Right cardiac atrium (tissue), 5 donors: ENCODE measurements at regions of chr1 and their contacts with region 1.

Region 1: DNA sequence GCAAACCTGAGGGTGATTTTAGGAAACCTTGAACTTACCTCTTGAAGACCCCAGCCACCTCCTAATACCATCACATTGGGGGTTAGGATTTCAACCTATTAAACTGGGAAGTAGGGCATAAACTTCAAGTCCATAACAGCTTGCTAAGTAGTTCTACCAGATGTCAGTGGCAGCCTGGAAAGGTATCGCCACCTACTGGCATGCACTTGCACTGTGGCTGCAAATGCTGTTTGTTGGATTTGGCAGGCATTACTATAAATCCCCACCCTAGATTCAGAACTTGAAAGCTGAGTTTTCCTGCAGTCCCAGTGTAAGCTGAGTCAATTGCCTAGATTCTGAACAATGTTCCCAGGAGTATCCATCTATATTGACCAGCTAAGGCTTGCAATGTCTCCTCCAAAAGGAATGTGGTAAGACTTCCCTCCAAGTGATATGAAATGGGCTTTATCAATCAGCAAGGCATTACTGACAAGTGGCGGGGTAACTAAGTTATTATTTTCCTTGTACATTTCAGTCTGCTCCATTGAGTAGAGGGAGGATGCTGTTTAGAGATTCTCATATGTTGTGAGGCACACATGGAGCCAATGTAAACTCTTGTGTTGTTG is 474.5 kb downstream of the PTPRC start:
- DNase-seq: peak; percentile 23 to 65 (median 56)
- ATAC-seq: no peak
- H3K4me3 ChIP-seq: no peak overlapping the region
- H3K27ac ChIP-seq: no peak overlapping the region
- H3K4me1 ChIP-seq: no peaks in the 10 kb centered on the region
- H3K27me3 ChIP-seq: no peaks in the 10 kb centered on the region

Region 2: DNA sequence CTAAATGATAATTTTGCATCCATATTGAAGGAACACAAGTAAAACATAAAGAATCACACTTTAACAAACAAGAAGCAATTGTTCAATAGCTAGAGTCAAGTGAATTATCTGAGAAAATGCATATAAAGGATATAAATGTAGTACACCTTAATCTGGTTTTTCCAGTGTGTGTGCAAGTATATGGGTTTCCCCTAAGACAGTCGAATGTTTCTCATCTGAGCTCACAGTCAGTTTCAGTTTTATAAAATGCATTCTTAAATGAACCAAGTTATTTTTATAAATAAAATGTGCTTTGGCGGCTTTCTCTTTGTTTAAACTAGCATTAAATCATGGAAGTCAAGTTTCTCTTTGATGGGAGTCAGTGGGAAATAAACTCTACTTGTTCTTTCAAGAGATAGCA is 348.6 kb before region 1 on chr1:
- intact Hi-C with region 1: loop called in 1 of 4 experiments (anchors 5 kb)
- DNase-seq: no peak
- ATAC-seq: no peak
- H3K4me3 ChIP-seq: no peak overlapping the region
- H3K27ac ChIP-seq: no peak overlapping the region
- H3K4me1 ChIP-seq: no peaks in the 10 kb centered on the region
- H3K27me3 ChIP-seq: no peaks in the 10 kb centered on the region

Region 3: DNA sequence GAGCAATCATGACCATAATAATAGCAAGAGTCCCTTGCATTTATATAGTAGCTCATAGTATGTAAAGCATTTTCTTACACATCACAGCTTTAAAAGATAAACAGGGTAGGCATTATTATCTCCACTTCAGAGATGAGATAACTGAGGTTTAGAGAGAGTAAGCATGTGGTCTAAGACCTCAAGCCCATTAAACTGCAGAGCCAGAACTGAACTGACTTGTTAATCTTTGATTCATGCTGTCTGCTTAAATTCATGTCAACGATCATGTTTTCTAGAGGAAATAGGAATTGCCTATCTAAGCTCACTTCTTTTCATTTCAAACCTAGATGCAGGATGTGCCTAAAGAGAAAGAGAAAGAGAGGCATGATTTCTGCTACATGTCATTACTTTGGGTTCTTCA is 50.3 kb after region 1 on chr1:
- intact Hi-C with region 1: no loop called
- DNase-seq: no peak
- ATAC-seq: no peak
- H3K4me3 ChIP-seq: no peak overlapping the region
- H3K27ac ChIP-seq: no peak overlapping the region
- H3K4me1 ChIP-seq: no peaks in the 10 kb centered on the region
- H3K27me3 ChIP-seq: no peaks in the 10 kb centered on the region